ENCODE measurements at regions of chr17 and their contacts with region 1.

Region 1: GRCh38 chr17:78013683-78014467 is 55.4 kb downstream of the TNRC6C start:
- DNase-seq: peak; percentile 49
- CTCF ChIP-seq: peak; percentile 70

Region 2: GRCh38 chr17:77331301-77331864 is 682.5 kb before region 1 on chr17:
- in situ Hi-C with region 1: loop called (anchors 25 kb)
- DNase-seq: peak; percentile 89
- CTCF ChIP-seq: peak; percentile 94

Region 3: DNA sequence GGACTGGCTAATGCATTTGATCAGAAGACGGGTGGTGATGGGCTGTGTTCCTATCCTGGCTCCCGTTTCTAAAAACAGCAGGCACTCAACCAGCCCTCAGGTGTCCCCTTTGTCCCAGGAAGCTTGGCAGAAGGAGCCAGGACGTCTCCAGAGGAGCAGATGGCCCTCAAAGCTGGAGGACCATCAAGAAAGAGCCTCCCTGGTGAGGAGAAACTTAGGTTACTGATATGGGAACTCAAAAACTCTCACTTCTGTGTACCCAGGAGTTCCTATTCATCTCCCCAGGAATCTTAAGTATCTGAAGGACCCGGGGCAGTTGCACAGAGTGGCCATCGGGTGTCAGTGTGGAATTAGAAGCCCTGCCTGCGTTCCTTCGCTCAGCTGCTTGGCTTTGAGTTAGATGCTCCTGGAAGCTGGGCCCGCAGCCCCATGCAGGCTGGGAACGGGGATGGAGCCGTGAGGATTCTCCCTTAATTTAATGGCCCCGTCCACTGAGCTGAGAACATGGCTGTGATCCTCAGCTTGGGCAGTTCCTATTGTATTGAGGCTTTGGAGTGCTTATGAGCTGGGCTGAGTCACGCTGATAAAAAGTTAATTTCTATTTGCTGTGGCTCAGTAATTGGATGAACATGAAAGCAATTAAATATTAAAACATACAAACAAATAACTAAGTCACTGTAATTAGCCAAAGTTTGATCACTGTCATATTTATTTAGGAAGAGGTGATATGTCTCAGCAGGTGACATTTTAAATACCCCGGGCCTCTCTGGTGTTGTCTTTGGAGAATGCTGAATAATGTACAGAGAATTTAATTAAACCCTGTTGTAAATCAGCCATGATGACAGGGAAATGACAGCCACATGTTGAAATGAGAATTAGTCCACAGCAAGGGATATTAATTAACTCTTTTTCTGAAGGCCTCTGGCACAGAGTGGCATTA is 471.1 kb before region 1 on chr17:
- in situ Hi-C with region 1: loop called (anchors 25 kb)
- DNase-seq: peak; percentile 82
- CTCF ChIP-seq: peak; percentile 87

Region 4: GRCh38 chr17:77829843-77830799 is 183.8 kb before region 1 on chr17:
- in situ Hi-C with region 1: no loop called
- DNase-seq: no peak
- CTCF ChIP-seq: no peak

Region 5: GRCh38 chr17:77869665-77870132 is 144.2 kb before region 1 on chr17:
- in situ Hi-C with region 1: no loop called
- DNase-seq: peak; percentile 78
- CTCF ChIP-seq: no peak

Measured in GM13977 (cell line).